Dendritic cell treated with granulocyte-macrophage colony-stimulating factor and Interleukin-4, amounts not matched to agents 40 ng/mL and 50 ng/mL, for 4 days (primary cell): ENCODE measurements at regions of chr20 and their contacts with region 1.

Region 1: DNA sequence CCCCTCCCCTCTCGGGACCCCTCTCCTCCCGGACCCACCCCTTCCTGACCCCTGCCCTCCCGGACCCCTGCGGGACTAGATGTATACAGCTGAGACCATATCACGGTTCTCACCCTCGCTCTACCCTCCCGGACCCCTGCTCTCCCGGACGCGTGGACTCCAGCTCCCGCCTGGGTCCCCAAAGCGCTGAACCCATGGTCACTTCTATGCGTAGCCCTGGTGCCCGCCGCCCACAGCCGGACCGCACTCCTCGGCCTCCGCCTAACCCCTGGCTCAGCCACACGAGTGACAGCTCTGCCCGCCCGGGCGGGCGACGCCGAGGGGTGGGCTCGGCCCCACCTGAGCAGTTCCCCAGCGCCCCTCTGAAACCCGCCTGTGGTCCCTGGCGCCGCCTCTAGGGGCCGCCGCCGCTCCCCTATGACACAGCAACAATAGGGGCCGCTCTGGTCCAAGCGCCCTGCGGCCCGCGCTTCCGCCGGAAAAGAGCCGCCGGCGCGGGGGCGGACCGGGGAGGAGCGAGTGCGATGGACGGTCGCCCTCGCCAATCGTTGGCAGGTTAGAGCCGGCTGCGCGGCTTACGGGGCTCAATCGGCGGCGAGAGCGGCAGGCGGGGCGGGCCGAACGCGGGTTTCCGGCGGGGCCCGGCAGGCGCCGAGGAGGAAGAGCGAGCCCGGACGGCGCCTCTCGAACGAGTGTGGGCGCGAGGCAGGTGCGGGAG is at the start of gene ADRM1:
- H3K4me3 Mint-ChIP-seq: peak within 1 kb of the TSS; percentile 92
- H3K27ac Mint-ChIP-seq: peak within 1 kb of the TSS; percentile 99
- H3K4me1 Mint-ChIP-seq: peaks cover 38% of the 10 kb centered on the region
- H3K27me3 Mint-ChIP-seq: no peaks in the 10 kb centered on the region

Region 2: GRCh38 chr20:62237801-62238571 is 64.5 kb before region 1 on chr20 and contains the start of gene OSBPL2:
- intact Hi-C with region 1: loop called (anchors 5 kb)
- H3K4me3 Mint-ChIP-seq: peak within 1 kb of the TSS; percentile 89
- H3K27ac Mint-ChIP-seq: peak within 1 kb of the TSS; percentile 65
- H3K4me1 Mint-ChIP-seq: peaks cover 45% of the 10 kb centered on the region
- H3K27me3 Mint-ChIP-seq: peaks cover 8% of the 10 kb centered on the region

Region 3: GRCh38 chr20:62386383-62387218 is 84.1 kb after region 1 on chr20 and contains the start of gene RPS21:
- intact Hi-C with region 1: loop called (anchors 1 kb)
- H3K4me3 Mint-ChIP-seq: peak within 1 kb of the TSS; percentile 87
- H3K27ac Mint-ChIP-seq: peak within 1 kb of the TSS; percentile 83
- H3K4me1 Mint-ChIP-seq: peaks cover 55% of the 10 kb centered on the region
- H3K27me3 Mint-ChIP-seq: no peaks in the 10 kb centered on the region

Region 4: DNA sequence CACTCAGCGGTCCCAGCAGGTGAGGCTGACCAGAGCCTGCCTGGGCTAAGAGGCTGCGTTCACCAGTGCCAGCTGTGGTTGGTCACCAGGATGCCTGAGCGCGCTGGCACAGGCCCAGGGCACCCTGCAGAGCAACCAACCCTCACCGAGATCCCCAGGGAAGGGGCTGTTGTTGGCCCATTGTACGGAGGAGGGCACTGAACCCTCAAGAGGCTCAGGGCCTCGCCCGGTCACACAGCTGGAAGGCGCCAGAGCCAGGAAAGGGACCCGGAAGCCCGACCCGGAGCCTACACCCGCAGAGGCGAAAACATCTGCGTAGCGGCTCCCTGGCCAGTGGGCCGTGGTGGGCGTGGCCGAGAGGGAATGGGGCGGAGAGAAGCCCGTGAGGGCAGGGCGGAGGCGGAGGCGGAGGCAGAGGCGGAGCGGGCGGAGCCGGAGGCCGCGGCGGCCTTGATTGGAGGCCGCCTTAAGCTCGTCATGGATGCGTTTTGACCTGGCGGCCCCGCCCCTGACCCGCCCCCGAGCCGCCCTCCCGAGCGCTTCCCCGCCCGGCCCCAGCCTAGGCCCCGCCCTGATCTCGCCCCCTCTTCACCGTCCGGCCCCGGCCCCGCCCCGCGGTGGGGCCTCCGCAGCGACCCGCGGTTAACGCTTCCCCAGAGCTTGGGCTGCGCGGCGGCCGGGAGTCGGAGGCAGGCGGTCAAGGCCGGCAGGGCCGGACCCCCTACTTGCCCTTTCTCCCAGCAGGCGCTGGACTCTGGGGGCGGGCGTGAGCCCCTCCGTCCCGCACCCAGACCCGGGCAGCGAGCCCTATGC is 491.6 kb after region 1 on chr20:
- intact Hi-C with region 1: loop called (anchors 5 kb)
- H3K4me3 Mint-ChIP-seq: peak overlapping the region; percentile 72
- H3K27ac Mint-ChIP-seq: peak overlapping the region; percentile 92
- H3K4me1 Mint-ChIP-seq: peaks cover 57% of the 10 kb centered on the region
- H3K27me3 Mint-ChIP-seq: no peaks in the 10 kb centered on the region